ENCODE measurements at regions of chr6 and their contacts with region 1.

Region 1: DNA sequence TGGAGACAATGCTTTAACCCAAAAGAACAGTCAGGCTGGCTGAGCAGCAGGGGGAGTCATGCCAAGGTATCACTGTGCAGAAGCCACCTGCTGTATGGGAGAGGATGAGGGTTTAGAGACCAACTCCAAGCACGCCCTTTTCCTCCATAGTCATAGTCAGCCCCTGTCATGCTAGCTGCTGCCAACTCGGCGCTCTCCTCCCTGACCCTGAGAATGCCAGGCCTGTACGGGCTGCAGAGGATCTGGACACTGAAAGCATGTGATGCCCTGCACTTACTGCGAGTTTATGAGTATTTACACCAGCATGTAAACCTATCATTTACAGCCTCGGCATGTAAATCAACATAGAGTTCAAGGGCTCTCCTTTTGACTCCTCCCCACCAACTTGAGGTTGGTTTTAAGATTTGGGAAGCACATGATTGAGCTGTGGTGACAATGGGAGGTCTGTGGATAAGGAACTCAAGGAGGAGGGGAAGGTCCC is 11.7 kb upstream of the SCUBE3 start:
- DNase-seq: no peak
- H3K4me3 ChIP-seq: no peak overlapping the region
- H3K27ac ChIP-seq: no peak overlapping the region
- H3K4me1 ChIP-seq: peaks cover 5% of the 10 kb centered on the region
- H3K27me3 ChIP-seq: no peaks in the 10 kb centered on the region
- CTCF ChIP-seq: no peak

Region 2: DNA sequence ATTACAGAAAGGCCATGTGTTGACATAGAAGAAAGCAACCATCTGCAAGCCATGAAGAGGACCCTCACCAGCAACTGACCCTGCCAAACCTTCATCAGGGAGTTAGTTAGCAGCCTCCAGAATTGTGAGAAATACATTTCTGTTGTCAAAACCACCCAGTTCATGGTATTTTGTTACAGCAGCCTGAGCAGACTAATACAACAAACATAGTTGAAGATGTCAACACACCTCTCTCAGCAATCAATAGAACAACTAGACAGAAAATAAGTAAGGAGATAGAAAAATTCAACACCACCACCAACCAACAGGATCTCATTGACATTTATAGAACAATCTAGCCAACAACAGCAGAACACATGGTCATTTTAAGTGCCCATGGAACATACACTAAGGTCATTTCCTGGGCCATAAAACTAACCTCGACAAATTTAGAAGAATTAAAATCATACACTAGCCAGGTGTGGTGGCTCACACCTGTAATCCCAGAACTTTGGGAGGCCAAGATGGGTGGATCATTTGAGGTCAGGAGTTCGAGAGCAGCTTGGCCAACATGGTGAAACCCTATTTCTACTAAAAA is 93.7 kb before region 1 on chr6:
- CTCF ChIA-PET with region 1: no interaction called
- dilution Hi-C with region 1: no loop called
- in situ Hi-C with region 1: no loop called
- intact Hi-C with region 1: no loop called
- DNase-seq: no peak
- H3K4me3 ChIP-seq: no peak overlapping the region
- H3K27ac ChIP-seq: no peak overlapping the region
- H3K4me1 ChIP-seq: no peaks in the 10 kb centered on the region
- H3K27me3 ChIP-seq: no peaks in the 10 kb centered on the region
- CTCF ChIP-seq: no peak

Region 3: GRCh38 chr6:35139908-35140655 is 62.0 kb before region 1 on chr6:
- CTCF ChIA-PET with region 1: no interaction called
- dilution Hi-C with region 1: loop called (anchors 5 kb)
- in situ Hi-C with region 1: loop called in 1 of 2 experiments (anchors 10 kb)
- intact Hi-C with region 1: no loop called
- DNase-seq: peak; percentile 36
- H3K4me3 ChIP-seq: no peak overlapping the region
- H3K27ac ChIP-seq: no peak overlapping the region
- H3K4me1 ChIP-seq: no peaks in the 10 kb centered on the region
- H3K27me3 ChIP-seq: no peaks in the 10 kb centered on the region
- CTCF ChIP-seq: peak; percentile 87 to 89

Region 4: DNA sequence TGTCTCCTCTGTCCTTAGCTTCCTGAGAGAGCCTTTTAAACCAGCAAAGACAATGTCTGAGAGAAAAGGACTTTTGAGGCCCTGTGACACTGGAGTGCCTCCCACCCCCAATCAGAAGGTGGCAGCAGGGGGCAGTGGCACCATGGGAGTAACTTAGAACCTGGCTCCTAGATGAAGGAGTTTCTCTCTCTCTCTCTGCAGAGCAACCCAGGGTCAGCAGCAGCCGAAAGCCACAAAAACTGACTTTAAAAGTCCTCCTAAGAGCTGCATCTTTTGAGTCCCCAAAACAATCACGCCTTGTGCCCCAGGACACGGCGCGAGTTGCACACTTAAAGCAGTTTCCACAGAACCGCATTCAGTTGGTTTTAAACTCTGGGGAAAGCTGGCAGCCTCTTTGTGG is 55.7 kb before region 1 on chr6:
- CTCF ChIA-PET with region 1: interaction called, 4 read pairs
- dilution Hi-C with region 1: loop called (anchors 5 kb)
- in situ Hi-C with region 1: loop called in 1 of 2 experiments (anchors 10 kb)
- intact Hi-C with region 1: loop called (anchors 1 kb)
- DNase-seq: peak; percentile 35
- H3K4me3 ChIP-seq: no peak overlapping the region
- H3K27ac ChIP-seq: no peak overlapping the region
- H3K4me1 ChIP-seq: peaks cover 10% of the 10 kb centered on the region
- H3K27me3 ChIP-seq: no peaks in the 10 kb centered on the region
- CTCF ChIP-seq: peak; percentile 53 to 81

Region 5: GRCh38 chr6:35240840-35241801 is 39.0 kb after region 1 on chr6:
- CTCF ChIA-PET with region 1: no interaction called
- dilution Hi-C with region 1: no loop called
- in situ Hi-C with region 1: no loop called
- intact Hi-C with region 1: loop called (anchors 1 kb)
- DNase-seq: peak; percentile 62
- H3K4me3 ChIP-seq: no peak overlapping the region
- H3K27ac ChIP-seq: no peak overlapping the region
- H3K4me1 ChIP-seq: no peaks in the 10 kb centered on the region
- H3K27me3 ChIP-seq: no peaks in the 10 kb centered on the region
- CTCF ChIP-seq: peak; percentile 96 to 98

Region 6: GRCh38 chr6:36650848-36651478 is 1448.9 kb after region 1 on chr6:
- CTCF ChIA-PET with region 1: no interaction called
- dilution Hi-C with region 1: no loop called
- in situ Hi-C with region 1: no loop called
- intact Hi-C with region 1: no loop called
- DNase-seq: no peak
- H3K4me3 ChIP-seq: no peak overlapping the region
- H3K27ac ChIP-seq: no peak overlapping the region
- H3K4me1 ChIP-seq: peaks cover 8% of the 10 kb centered on the region
- H3K27me3 ChIP-seq: no peaks in the 10 kb centered on the region
- CTCF ChIP-seq: no peak